GM10248 (cell line): ENCODE measurements at regions of chr20 and their contacts with region 1.

Region 1: DNA sequence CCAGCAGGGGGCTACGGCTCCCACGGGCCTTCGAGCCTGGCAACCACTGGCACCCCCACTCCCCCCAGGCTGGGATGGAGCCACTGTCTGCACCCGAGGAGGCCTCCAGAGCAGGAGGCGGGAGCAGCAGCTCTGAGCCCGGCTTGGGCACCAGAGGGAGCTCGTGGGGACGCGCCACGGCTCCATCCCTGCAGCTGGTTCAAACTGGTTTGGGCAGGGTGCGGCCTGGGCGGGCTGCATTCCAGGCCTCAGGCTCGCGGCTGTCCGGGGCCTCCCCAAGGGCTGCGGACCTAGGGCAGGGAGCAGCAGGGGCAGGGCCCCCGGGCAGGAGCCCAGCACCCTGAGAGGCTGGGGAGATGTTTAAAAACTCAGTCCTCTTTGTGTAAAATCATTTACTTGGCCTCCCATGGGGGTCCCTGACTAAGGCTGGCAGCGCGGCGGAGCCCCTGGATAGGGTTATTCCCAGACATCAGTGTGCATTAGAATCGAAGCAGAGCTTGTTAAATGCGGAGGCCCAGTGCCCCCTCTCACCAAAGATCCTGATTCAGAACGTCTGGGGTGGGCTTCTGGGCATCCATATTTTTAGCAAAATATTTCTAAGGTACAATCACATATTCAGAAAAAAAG is 4.1 kb upstream of the BCAS4 start:
- DNase-seq: peak; percentile 90
- CTCF ChIP-seq: peak; percentile 92

Region 2: DNA sequence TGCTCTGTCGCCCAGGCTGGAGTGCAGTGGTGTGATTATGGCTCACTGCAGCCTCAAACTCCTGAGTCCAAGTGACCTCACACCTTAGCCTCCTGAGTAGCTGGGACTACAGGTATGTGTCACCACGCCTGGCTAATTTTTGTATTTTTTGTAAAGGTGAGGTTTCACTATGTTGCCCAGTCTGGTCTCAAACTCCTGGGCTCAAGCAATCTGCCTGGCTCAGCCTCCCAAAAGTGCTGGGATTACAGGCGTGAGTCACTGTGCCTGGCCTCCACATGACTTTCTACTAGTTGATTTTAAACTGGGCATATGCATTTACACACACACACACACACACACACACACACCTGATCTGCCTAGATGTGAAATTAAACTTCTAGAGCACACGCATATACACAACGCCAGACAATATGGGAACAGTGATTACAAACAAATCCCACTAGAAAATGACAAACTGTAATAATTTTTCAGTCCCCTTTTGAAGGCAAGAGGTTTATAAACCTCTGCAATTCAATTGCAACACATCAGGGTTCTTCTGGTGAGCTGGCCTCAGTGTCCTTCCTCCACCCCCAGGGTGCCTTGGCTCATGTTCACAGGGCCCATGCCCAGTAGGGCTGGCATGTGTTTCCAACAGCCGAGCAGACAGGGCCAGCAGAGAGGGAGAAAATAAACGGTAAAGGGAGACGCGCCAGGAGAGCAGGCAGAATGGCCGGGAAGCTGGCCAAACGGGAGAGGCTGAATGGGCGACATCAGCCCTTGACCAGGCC is 28.1 kb before region 1 on chr20:
- CTCF ChIA-PET with region 1: no interaction called
- POLR2A ChIA-PET with region 1: no interaction called
- DNase-seq: no peak
- CTCF ChIP-seq: no peak

Region 3: GRCh38 chr20:50776122-50776817 is 14.5 kb before region 1 on chr20:
- CTCF ChIA-PET with region 1: interaction called, 28 read pairs
- POLR2A ChIA-PET with region 1: no interaction called
- DNase-seq: no peak
- CTCF ChIP-seq: no peak

Region 4: DNA sequence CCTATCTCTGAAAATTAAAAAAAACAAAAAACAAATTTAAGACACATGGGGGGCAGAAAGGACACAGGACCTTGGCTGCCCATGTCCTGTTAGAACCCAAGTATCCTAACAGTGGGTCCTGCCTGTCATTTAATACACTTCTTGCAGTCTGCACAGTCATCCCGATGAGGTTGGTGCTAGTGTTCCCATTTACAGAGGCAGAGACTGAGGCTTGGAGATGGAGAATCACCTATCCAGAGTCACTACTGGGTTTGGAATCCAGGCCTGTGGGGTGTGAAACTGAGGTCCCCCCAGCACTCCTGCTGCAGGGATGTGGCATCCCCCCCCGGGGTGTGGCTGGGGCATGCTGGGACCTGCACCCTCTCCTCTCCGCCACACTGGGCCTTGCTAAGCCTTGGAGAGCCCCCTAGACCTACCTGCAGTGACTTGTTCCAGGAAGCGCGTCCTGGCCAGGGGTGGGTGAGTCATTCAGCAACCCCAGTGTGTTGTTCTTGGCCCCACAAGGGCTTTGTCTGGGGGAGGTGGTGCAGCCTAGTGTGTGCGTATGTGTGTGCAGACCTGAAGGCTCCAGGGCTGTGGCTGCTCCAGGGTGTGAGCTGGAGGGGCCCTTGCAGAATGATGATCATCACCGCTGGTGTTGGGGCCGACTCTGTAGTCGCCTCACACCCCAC is 53.8 kb after region 1 on chr20:
- CTCF ChIA-PET with region 1: interaction called, 23 read pairs
- POLR2A ChIA-PET with region 1: interaction called, 4 read pairs
- DNase-seq: peak; percentile 91
- CTCF ChIP-seq: no peak

Region 5: GRCh38 chr20:50919567-50919966 is 128.8 kb after region 1 on chr20:
- CTCF ChIA-PET with region 1: interaction called, 220 read pairs
- POLR2A ChIA-PET with region 1: interaction called, 3 read pairs
- DNase-seq: no peak
- CTCF ChIP-seq: no peak

Region 6: GRCh38 chr20:50948132-50948785 is 157.5 kb after region 1 on chr20:
- CTCF ChIA-PET with region 1: interaction called, 11 read pairs
- POLR2A ChIA-PET with region 1: no interaction called
- DNase-seq: no peak
- CTCF ChIP-seq: no peak

Region 7: GRCh38 chr20:50987592-50988210 is 196.9 kb after region 1 on chr20:
- CTCF ChIA-PET with region 1: interaction called, 20 read pairs
- POLR2A ChIA-PET with region 1: no interaction called
- DNase-seq: peak; percentile 74
- CTCF ChIP-seq: peak; percentile 79